Heart right ventricle (tissue), 16 donors: ENCODE measurements at regions of chr14 and their contacts with region 1.

Region 1: GRCh38 chr14:99320105-99320572 is 48.1 kb upstream of the BCL11B start:
- DNase-seq: peak in 1 of 2 donors; percentile 43
- ATAC-seq: peak in 6 of 8 donors; percentile 20 to 69 (median 52)
- H3K4me3 ChIP-seq: no peak overlapping the region
- H3K27ac ChIP-seq: no peak overlapping the region
- H3K4me1 ChIP-seq: no peaks in the 10 kb centered on the region
- H3K27me3 ChIP-seq: peaks cover 0 to 50% (median 29%) of the 10 kb centered on the region in 7 donors
- CTCF ChIP-seq: peak; percentile 40 to 78 (median 72)

Region 2: GRCh38 chr14:98919434-98919833 is 400.7 kb before region 1 on chr14:
- intact Hi-C with region 1: no loop called
- DNase-seq: no peak
- ATAC-seq: no peak
- H3K4me3 ChIP-seq: no peak overlapping the region
- H3K27ac ChIP-seq: no peak overlapping the region
- H3K4me1 ChIP-seq: no peaks in the 10 kb centered on the region
- H3K27me3 ChIP-seq: peaks cover 0 to 28% (median 7%) of the 10 kb centered on the region in 7 donors
- CTCF ChIP-seq: no peak

Region 3: DNA sequence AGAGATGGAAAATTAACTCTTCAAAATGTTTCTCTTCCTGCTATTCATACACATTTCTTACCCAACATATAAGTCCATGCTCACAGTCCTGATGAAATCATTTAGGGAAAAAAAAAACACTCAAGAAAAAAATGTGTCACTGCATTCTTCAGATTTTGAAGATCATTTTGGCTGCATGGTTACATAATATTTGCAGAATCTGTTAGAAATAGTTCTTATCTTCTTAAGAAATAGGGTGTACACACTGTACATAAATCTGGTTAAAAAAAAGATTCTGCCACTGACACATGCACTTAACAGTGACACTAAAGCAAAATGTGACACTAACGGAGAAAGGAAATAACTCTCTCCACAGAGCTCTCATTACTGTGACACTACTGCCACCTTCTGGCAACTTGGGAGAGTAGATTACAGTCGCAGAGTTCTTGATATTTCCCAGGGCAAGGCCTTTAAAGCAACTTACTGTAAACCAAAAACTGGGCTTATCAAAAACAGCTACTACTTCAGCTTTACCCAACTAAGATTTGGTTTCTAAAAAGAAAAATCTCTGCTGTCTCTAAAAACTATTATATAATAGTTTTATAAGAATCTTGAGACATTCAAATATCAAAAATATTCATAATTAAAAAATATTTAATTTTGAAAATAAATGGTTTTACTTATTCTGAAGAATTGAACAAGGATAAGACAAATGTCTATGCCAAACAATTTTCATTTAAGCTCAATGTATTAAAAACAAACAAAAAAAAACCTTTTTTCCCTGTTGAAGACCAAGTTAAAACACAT is 95.5 kb after region 1 on chr14:
- intact Hi-C with region 1: loop called in 6 of 10 experiments (anchors 2 to 10 kb)
- DNase-seq: peak in 1 of 2 donors; percentile 57
- ATAC-seq: peak; percentile 75 to 86 (median 78)
- H3K4me3 ChIP-seq: no peak overlapping the region
- H3K27ac ChIP-seq: no peak overlapping the region
- H3K4me1 ChIP-seq: peaks cover 0 to 7% (median 4%) of the 10 kb centered on the region in 9 donors
- H3K27me3 ChIP-seq: no peaks in the 10 kb centered on the region
- CTCF ChIP-seq: peak; percentile 59 to 88 (median 82)

Region 4: GRCh38 chr14:99910337-99911309 is 590.5 kb after region 1 on chr14:
- intact Hi-C with region 1: no loop called
- DNase-seq: no peak
- ATAC-seq: no peak
- H3K4me3 ChIP-seq: no peak overlapping the region
- H3K27ac ChIP-seq: no peak overlapping the region
- H3K4me1 ChIP-seq: no peaks in the 10 kb centered on the region
- H3K27me3 ChIP-seq: no peaks in the 10 kb centered on the region
- CTCF ChIP-seq: no peak